ENCODE measurements at regions of chr15 and their contacts with region 1.

Region 1: GRCh38 chr15:70875001-70875782 is 17.0 kb downstream of the THAP10 start:
- DNase-seq: no peak
- H3K4me3 ChIP-seq: no peak overlapping the region
- H3K27me3 ChIP-seq: no peaks in the 10 kb centered on the region
- CTCF ChIP-seq: peak; percentile 77

Region 2: GRCh38 chr15:70863450-70864218 is 11.6 kb before region 1 on chr15:
- CTCF ChIA-PET with region 1: interaction called, 35 read pairs
- POLR2A ChIA-PET with region 1: no interaction called
- DNase-seq: no peak
- H3K4me3 ChIP-seq: no peak overlapping the region
- H3K27me3 ChIP-seq: no peaks in the 10 kb centered on the region
- CTCF ChIP-seq: no peak

Region 3: GRCh38 chr15:70964058-70964457 is 88.9 kb after region 1 on chr15:
- CTCF ChIA-PET with region 1: no interaction called
- POLR2A ChIA-PET with region 1: no interaction called
- DNase-seq: no peak
- H3K4me3 ChIP-seq: no peak overlapping the region
- H3K27me3 ChIP-seq: no peaks in the 10 kb centered on the region
- CTCF ChIP-seq: no peak

Measured in BJ (cell line).